OCI-LY7 (cell line): ENCODE measurements at regions of chr14 and their contacts with region 1.

Region 1: DNA sequence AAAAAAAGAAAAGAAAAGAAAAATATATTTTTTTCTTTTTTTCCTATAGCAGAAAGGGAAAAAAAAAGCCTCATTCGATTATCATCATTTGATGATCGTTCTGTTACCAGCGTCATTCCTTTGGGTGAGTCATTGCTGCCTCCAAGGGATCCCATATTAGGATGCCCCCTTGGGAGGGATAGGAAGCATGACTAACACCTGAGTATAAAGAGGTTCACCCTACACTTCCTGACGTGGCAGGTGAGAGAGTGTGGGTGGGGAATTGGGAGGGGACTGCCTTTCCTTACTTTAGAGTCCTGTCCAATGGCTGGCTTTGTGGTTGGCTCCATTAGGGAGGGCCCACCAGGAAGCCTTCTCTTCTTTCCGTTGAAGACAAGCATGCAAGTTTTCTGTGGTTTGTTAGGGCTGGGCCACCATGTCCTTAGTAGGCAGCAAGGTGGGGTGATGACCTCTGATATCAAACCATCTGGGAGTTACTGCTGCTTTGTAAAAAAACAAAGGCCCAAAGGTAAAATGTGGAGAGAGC is 56.1 kb upstream of the FUT8 start:
- DNase-seq: peak; percentile 54
- H3K4me3 ChIP-seq: peak overlapping the region; percentile 38
- H3K27ac ChIP-seq: peak overlapping the region; percentile 97
- H3K4me1 ChIP-seq: peaks cover 98% of the 10 kb centered on the region
- CTCF ChIP-seq: no peak

Region 2: GRCh38 chr14:65229751-65230749 is 126.3 kb before region 1 on chr14:
- CTCF ChIA-PET with region 1: no interaction called
- POLR2A ChIA-PET with region 1: no interaction called
- intact Hi-C with region 1: loop called (anchors 5 kb)
- DNase-seq: peak; percentile 30
- H3K4me3 ChIP-seq: peak overlapping the region; percentile 52
- H3K27ac ChIP-seq: no peak overlapping the region
- H3K4me1 ChIP-seq: peaks cover 60% of the 10 kb centered on the region
- CTCF ChIP-seq: no peak

Region 3: DNA sequence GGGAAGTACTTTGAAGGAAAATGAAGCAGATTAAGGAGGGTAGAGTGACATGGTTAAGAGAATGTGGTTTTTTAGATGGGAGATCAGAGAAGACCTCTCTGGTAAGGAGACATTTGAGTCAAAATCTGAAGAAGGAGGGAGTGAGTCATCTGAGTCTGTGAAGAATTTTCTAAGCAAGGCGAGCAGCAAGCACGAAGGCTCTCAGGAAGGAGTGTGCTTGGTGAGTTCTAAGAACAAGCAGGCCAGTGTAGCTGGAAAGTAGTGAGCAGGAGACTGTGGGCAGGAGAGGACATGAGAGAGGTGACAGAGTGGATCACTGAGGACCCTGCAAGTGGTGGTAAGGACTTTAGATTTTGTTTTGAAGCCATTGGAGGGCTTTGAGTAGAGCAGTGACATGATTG is 20.2 kb before region 1 on chr14:
- CTCF ChIA-PET with region 1: interaction called, 3 read pairs
- POLR2A ChIA-PET with region 1: interaction called, 123 read pairs
- intact Hi-C with region 1: no loop called
- DNase-seq: no peak
- H3K4me3 ChIP-seq: no peak overlapping the region
- H3K27ac ChIP-seq: no peak overlapping the region
- H3K4me1 ChIP-seq: peaks cover 61% of the 10 kb centered on the region
- CTCF ChIP-seq: no peak

Region 4: DNA sequence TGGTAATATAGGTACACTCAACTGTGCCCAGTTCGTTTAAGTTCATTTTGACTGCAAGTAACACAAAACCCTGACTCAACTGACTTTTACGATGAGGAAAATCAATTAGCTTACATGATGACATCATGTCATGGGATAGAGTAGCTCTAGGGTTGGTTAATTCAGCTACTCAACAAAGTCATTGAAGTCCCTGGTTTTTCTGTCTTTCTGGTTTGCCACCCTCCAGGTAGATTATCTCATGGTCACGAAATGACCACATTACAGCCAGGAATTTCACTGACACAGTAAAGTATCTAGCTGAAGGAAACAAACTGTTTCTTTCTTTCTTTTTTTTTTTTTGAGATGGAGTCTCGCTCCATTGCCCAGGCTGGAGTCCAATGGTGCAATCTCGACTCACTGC is 12.4 kb before region 1 on chr14:
- CTCF ChIA-PET with region 1: no interaction called
- POLR2A ChIA-PET with region 1: interaction called, 29 read pairs
- intact Hi-C with region 1: no loop called
- DNase-seq: no peak
- H3K4me3 ChIP-seq: no peak overlapping the region
- H3K27ac ChIP-seq: no peak overlapping the region
- H3K4me1 ChIP-seq: peaks cover 30% of the 10 kb centered on the region
- CTCF ChIP-seq: no peak

Region 5: GRCh38 chr14:65661861-65662260 is 305.5 kb after region 1 on chr14:
- CTCF ChIA-PET with region 1: no interaction called
- POLR2A ChIA-PET with region 1: no interaction called
- intact Hi-C with region 1: no loop called
- DNase-seq: no peak
- H3K4me3 ChIP-seq: no peak overlapping the region
- H3K27ac ChIP-seq: no peak overlapping the region
- H3K4me1 ChIP-seq: peaks cover 19% of the 10 kb centered on the region
- CTCF ChIP-seq: no peak